Dendritic cell treated with granulocyte-macrophage colony-stimulating factor and Interleukin-4, amounts not matched to agents 40 ng/mL and 50 ng/mL, for 4 days (primary cell): ENCODE measurements at regions of chr11 and their contacts with region 1.

Region 1: DNA sequence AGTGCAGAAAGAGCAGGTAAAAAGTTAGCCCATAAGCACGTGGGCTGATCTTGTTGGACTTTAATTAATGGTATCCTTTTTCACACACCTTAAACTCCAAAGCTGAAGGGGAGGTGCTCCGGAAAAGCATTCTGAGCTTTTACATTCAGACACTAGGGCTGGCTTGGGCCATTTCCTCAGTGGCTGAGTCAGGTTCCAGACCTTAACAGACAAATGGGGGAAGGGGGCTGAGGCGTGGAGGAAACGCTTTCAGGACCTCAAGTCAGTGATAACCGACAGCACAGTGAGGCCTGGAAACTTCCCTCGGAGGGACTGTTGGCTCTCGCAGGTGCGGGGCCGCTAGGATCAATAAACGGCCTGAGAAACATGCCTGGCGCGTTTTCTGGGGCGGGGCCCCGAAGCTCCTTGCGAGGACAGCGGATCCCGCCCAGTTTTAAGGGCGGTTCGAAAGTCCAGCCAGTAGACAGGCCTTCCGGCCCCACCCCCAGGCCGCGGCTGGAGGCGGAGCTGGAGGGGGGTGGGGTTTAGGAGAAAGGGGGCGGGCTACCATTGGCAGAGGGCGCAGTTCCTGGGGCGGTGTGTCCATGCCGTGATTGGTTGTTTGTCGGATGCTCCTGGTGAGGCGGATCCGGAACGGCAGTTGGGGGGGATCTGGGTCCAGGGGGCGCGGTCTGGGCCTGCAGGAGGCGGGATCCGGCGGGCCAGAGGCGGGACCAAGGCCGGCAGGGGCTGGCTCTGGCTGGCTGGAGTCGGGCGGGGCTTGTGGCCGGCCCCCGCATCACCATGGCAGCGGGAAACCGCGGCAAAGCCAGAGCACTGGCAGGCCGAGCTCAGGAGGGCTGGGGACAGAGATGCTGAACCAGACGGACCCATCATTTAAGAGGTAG is 8.0 kb downstream of the C11orf52 start:
- H3K4me3 Mint-ChIP-seq: peak overlapping the region; percentile 79
- H3K27ac Mint-ChIP-seq: peak overlapping the region; percentile 82
- H3K4me1 Mint-ChIP-seq: peaks cover 17% of the 10 kb centered on the region
- H3K27me3 Mint-ChIP-seq: no peaks in the 10 kb centered on the region

Region 2: GRCh38 chr11:111836721-111837120 is 90.0 kb before region 1 on chr11:
- intact Hi-C with region 1: no loop called
- H3K4me3 Mint-ChIP-seq: no peak overlapping the region
- H3K27ac Mint-ChIP-seq: no peak overlapping the region
- H3K4me1 Mint-ChIP-seq: no peaks in the 10 kb centered on the region
- H3K27me3 Mint-ChIP-seq: no peaks in the 10 kb centered on the region

Region 3: DNA sequence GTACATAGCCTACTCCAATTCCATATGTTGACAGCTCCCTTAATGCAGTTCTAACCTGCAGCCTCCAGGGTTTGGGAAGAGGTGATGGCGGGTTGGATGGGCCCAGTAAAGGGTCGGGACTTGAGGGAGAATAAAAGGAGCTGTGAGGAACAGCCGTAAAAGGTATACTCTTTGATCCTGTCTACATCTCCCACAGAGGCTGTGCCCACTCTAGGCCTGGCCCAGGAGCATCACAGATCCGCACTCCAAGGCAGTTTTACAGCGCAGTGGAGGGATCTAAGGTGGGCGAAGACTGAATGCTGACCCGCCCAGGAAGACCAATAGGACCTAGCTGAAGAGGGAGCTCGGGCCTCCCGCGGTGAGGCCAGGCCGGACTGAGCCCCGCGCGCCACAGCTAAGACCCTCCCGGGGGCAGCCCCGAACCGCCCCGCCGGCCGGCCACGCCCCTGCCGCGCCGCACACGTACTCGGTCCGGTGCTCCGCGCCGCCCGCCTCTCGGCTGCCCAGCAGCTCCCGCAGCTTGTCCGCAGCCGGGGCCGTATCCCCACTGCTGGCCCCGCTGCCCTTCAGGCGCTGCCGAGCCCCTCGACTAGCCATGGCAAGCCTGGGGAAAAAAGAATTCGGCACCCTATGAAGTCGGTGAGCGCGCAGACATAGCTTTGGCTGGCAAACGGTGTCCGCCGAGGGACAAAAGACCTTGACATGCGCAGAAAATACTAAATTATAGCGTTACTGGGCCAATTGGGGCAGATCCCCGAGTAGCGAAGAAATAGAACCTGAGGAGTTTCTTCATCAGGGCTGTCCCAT is 55.7 kb before region 1 on chr11 and contains the start of gene ALG9:
- intact Hi-C with region 1: loop called (anchors 2 kb)
- H3K4me3 Mint-ChIP-seq: peak within 1 kb of the TSS; percentile 84
- H3K27ac Mint-ChIP-seq: peak within 1 kb of the TSS; percentile 88
- H3K4me1 Mint-ChIP-seq: peaks cover 6% of the 10 kb centered on the region
- H3K27me3 Mint-ChIP-seq: no peaks in the 10 kb centered on the region

Region 4: GRCh38 chr11:111878849-111879636 is 47.7 kb before region 1 on chr11 and contains the starts of genes CFAP68 and FDXACB1:
- intact Hi-C with region 1: loop called (anchors 1 kb)
- H3K4me3 Mint-ChIP-seq: peak within 1 kb of the TSS; percentile 94
- H3K27ac Mint-ChIP-seq: peak within 1 kb of the TSS; percentile 97
- H3K4me1 Mint-ChIP-seq: peaks cover 29% of the 10 kb centered on the region
- H3K27me3 Mint-ChIP-seq: no peaks in the 10 kb centered on the region

Region 5: DNA sequence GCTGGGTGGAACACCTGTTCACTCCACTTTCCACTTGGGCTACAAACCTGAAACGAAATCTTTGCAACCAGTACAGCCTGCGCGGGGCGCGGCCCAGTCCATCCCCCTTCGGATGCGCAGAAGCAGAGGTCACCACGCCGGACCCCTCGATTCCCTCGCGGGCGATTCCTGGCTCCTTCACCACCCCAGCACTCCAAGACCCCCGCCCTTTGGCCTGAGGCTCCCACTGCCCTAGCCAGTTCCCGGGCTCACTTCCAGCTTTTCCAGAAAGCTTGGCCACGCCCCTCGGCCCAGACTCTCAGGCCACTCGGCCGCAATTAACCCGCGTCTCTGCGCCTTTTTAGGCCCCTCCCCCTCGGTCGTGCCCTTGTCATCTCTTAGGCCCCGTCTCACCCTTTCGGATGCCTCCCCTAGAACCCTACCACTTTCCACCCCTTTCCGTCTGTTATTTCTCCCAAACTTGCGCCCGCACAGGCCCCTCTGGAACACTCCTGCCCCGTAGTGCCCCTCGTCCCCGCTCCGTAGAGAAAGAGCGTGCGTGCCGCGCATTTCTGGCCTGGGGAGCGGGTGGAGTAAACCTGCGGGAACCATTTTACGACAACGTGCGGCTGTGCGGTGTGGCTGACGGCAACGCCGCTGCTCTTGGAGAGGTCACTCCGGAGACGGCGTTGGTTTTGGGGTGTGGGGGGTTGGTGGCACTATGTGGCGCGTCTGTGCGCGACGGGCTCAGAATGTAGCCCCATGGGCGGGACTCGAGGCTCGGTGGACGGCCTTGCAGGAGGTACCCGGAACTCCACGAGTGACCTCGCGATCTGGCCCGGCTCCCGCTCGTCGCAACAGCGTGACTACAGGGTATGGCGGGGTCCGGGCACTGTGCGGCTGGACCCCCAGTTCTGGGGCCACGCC is 98.3 kb after region 1 on chr11 and contains the start of gene DLAT:
- intact Hi-C with region 1: loop called (anchors 2 kb)
- H3K4me3 Mint-ChIP-seq: peak within 1 kb of the TSS; percentile 98
- H3K27ac Mint-ChIP-seq: peak within 1 kb of the TSS; percentile 96
- H3K4me1 Mint-ChIP-seq: peaks cover 11% of the 10 kb centered on the region
- H3K27me3 Mint-ChIP-seq: no peaks in the 10 kb centered on the region

Region 6: DNA sequence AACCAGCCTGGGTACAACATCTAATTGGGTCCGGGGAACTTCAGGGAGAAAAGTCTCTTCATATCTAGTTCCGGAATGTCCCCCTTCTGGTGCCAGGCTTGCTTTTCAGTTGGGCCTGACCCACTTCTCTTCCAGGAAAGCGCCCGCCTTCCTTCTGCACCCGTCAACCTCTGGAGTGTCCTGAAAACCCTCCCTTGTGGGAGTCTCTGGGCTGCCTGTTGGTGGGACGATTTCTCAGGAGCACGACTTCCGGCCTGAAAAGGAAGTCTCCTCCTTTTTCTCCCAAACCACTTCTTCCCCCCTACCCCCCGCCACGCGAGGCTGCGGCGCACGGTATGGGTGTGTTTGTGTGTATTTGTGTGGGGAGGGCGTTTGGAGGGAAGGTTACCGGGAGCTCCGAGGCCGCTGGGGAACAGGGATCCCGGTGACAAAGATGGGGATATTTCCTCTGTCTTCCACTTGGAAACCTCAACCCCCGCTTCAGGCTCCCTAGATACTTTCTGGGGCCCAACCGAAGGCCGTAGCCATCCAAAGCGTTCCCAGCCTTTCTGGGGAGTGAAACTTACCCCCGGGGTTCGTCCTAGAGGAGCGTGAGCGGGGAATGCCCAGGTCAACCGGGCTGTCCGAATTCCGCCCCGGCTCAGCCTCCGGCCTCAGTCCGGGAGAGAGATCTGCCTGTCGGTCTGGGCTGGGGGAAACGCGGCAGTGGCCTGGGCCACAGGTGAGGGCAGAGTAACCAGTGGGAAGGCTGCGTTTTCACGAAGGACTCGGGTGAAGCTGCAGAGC is 147.5 kb after region 1 on chr11 and contains the start of gene NKAPD1:
- intact Hi-C with region 1: loop called (anchors 5 kb)
- H3K4me3 Mint-ChIP-seq: peak within 1 kb of the TSS; percentile 96
- H3K27ac Mint-ChIP-seq: peak within 1 kb of the TSS; percentile 100
- H3K4me1 Mint-ChIP-seq: peaks cover 34% of the 10 kb centered on the region
- H3K27me3 Mint-ChIP-seq: no peaks in the 10 kb centered on the region

Region 7: GRCh38 chr11:112215631-112216030 is 288.9 kb after region 1 on chr11:
- intact Hi-C with region 1: no loop called
- H3K4me3 Mint-ChIP-seq: no peak overlapping the region
- H3K27ac Mint-ChIP-seq: no peak overlapping the region
- H3K4me1 Mint-ChIP-seq: peaks cover 6% of the 10 kb centered on the region
- H3K27me3 Mint-ChIP-seq: no peaks in the 10 kb centered on the region

Region 8: DNA sequence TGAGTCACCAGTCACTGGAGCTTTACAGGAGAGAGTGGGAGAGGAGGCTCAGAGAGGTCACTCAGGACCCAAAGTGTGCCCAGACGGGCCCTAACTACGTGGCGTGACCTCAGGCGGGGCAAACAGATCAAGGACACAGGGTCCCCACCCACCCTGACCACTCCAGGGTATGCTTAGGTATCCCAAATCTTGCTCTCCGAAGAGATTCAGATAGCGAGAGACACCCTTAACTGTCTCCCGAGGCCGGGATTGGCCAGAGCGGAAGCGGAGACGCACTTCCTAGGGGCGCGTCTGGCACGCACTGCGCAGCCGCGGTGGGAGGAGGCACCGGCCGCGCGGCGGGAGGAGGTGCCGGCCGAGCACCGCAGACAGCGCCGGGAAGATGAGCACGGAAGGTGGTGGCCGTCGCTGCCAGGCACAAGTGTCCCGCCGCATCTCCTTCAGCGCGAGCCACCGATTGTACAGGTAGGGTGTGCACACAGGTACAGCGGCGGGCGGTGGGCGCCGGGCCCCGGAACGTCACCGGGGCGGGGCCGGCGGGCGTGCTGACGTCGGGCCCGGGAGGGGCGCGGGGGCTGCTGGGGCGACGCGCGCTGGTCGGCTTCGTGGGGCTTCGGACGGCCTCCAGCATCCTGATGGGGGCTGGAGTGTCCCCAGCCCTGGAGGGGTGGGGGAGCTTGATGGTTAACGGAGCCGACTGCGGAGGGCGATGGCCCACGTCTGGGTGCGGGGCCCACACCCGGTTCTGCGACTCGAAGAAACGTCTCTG is 299.5 kb after region 1 on chr11 and contains the start of gene PTS:
- intact Hi-C with region 1: loop called (anchors 5 kb)
- H3K4me3 Mint-ChIP-seq: peak within 1 kb of the TSS; percentile 86
- H3K27ac Mint-ChIP-seq: peak within 1 kb of the TSS; percentile 98
- H3K4me1 Mint-ChIP-seq: peaks cover 24% of the 10 kb centered on the region
- H3K27me3 Mint-ChIP-seq: no peaks in the 10 kb centered on the region